ENCODE measurements at regions of chr6 and their contacts with region 1.

Region 1: DNA sequence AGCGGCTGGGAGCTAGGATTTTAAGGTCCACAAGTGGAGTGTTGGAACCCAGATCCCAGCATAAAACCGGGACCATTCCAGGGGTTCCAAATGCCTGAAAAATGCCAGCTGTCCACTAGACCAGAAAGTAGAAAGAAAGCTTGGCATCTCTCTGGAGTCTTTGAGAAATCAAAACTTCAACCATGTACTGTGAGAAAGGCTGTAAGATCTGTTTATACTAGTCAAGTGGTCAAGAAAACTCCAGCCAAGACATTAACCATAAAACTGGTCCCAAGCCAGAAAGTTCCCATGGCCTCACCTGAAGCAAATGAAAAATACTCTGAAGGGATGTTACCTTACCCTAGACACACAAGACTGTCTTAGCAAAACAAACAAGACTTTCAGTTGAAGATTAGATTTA is 112.6 kb downstream of the DCDC2 start:
- DNase-seq: no peak
- H3K4me3 ChIP-seq: no peak overlapping the region
- H3K27ac ChIP-seq: no peak overlapping the region
- H3K4me1 ChIP-seq: no peaks in the 10 kb centered on the region
- H3K27me3 ChIP-seq: no peaks in the 10 kb centered on the region
- CTCF ChIP-seq: no peak
- POLR2A ChIP-seq: no peak

Region 2: DNA sequence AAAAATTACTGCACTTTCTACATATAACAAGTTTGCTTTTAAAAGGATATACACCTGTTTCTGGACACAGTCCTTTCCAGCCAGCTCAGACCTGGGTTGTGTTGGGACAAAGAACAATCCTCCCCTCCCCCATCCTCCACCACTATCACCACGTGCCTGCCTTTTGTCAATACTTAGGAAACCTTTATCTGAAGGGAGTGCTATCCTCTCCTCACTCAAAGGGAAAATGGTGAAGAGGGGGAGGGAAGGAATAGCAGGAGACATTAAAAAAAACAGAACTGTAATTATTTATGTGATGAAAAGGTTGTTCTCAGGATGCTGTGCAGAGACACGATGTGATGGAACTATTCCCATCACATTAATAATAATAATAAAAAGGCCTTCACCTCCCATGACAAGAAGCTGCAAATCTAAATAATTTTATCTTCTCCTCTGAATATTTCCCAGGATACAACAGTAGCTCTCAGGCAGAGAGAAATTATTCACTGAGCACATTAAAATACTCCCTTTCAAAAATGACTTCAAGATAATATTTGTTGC is 13.8 kb before region 1 on chr6:
- intact Hi-C with region 1: loop called (anchors 1 kb)
- DNase-seq: no peak
- H3K4me3 ChIP-seq: no peak overlapping the region
- H3K27ac ChIP-seq: no peak overlapping the region
- H3K4me1 ChIP-seq: no peaks in the 10 kb centered on the region
- H3K27me3 ChIP-seq: no peaks in the 10 kb centered on the region
- CTCF ChIP-seq: no peak
- POLR2A ChIP-seq: no peak

Region 3: DNA sequence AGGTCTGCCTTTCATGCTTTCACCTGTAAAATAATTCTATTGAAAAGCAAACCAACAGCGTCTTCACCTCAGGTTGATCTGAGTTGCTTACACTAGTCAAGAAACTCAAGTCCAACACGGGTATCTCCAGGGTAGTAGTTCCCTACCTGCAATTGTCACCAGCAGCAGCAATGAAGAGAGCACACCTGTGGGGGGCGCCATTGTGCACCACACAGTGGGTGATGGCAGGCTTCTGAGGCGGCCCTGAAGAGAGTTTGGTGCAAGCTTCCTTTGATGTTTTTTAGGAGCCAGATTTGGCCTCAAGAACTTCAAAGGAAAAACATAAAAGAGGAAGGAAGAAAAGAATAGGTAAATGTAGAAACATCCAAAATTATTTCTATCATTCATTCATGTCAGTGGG is 355.6 kb after region 1 on chr6:
- intact Hi-C with region 1: loop called (anchors 5 kb)
- DNase-seq: no peak
- H3K4me3 ChIP-seq: no peak overlapping the region
- H3K27ac ChIP-seq: no peak overlapping the region
- H3K4me1 ChIP-seq: no peaks in the 10 kb centered on the region
- H3K27me3 ChIP-seq: no peaks in the 10 kb centered on the region
- CTCF ChIP-seq: no peak
- POLR2A ChIP-seq: no peak

Measured in breast epithelium (tissue), 4 donors.